GM12878 (cell line): ENCODE measurements at regions of chr1 and their contacts with region 1.

Region 1: GRCh38 chr1:97849345-97850340 is 71.2 kb downstream of the DPYD start:
- DNase-seq: no peak
- ATAC-seq: peak; percentile 60
- H3K4me3 ChIP-seq: no peak overlapping the region
- H3K27ac ChIP-seq: peak overlapping the region; percentile 20; the same call in 1 of the 2 replicates
- H3K4me1 ChIP-seq: peaks cover 6% of the 10 kb centered on the region; the same call in 1 of the 2 replicates
- H3K27me3 ChIP-seq: no peaks in the 10 kb centered on the region
- CTCF ChIP-seq: no peak
- EP300 ChIP-seq: no peak
- POLR2A ChIP-seq: no peak
- RAD21 ChIP-seq: no peak

Region 2: DNA sequence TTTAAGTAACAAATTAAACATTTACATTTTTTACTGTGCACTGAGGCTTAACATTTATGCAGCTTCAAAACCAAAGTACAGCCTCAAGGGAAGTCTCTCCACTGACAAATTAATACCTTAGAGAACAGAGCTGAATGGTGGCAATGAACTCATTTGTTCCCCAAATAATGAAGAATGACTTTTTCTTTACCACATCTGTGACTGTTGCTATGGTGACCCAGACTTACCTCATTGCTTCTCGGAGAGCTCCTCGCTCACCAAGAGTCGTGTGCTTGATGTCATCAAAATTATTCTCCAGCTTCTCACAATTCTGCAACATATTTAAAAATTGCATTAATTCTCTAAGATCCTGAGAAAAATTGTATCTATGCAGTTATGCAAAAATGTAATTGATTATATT is 21.8 kb before region 1 on chr1:
- CTCF ChIA-PET with region 1: interaction called, 4 read pairs
- POLR2A ChIA-PET with region 1: interaction called, 9 read pairs
- RAD21 ChIA-PET with region 1: interaction called, 7 read pairs
- SMC1A ChIA-PET with region 1: interaction called, 21 read pairs
- in situ Hi-C with region 1: no loop called
- intact Hi-C with region 1: no loop called
- DNase-seq: no peak
- ATAC-seq: peak; percentile 92
- H3K4me3 ChIP-seq: no peak overlapping the region
- H3K27ac ChIP-seq: no peak overlapping the region
- H3K4me1 ChIP-seq: no peaks in the 10 kb centered on the region
- H3K27me3 ChIP-seq: no peaks in the 10 kb centered on the region
- CTCF ChIP-seq: no peak
- EP300 ChIP-seq: no peak
- POLR2A ChIP-seq: no peak
- RAD21 ChIP-seq: no peak

Region 3: DNA sequence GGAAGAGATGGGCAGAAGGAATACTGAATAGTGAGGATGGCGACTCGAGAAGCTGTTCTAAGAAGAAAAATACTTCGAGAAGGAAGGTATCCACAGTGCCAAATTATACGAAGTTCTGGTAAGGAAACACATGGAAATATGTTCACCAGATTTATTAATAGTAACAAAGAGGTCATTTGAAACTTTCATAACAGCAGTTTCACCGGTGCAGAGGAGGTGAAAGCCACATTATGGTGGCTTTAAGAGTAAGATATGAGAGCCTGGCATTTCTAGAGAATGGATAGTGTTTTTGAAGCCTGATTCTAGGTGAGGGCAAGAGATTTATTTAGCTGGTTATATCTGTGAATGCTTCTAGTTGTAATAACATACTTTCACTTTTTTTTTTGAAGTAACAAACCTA is 15.0 kb after region 1 on chr1:
- CTCF ChIA-PET with region 1: interaction called, 4 read pairs
- POLR2A ChIA-PET with region 1: no interaction called
- RAD21 ChIA-PET with region 1: interaction called, 5 read pairs
- SMC1A ChIA-PET with region 1: interaction called, 10 read pairs
- in situ Hi-C with region 1: no loop called
- intact Hi-C with region 1: no loop called
- DNase-seq: no peak
- ATAC-seq: peak; percentile 85
- H3K4me3 ChIP-seq: 0 out of 2 replicates have a peak overlapping the region, but pooled peaks have one; percentile 31
- H3K27ac ChIP-seq: peak overlapping the region; percentile 35
- H3K4me1 ChIP-seq: no peaks in the 10 kb centered on the region
- H3K27me3 ChIP-seq: no peaks in the 10 kb centered on the region
- CTCF ChIP-seq: no peak
- EP300 ChIP-seq: no peak
- POLR2A ChIP-seq: no peak
- RAD21 ChIP-seq: no peak